Heart right ventricle (tissue), 16 donors: ENCODE measurements at regions of chr10 and their contacts with region 1.

Region 1: DNA sequence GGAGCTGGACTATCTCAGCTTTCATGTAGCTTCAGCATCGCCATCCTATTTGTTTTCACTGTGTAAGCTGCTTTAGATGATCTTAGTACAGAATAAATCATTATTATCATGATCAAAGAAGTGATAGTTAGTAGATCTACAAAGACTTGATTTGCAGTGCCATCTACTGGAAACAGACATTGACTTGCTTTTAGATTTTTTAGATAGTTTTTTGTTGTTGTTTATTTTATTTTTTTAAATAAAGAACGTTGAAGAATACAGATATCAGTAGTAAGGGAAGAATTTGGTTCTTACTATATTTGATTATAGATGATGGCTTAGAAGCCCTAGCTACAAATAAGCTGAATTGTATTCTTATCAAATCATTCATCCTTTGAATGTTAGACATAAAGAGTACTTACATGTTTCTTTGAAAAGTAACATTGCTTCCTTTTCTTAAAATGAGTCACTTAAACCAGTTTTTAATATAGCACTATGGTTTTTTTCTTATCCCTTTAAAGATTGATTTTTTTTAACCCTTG is 6.3 kb upstream of the SFMBT2 start:
- DNase-seq: no peak
- ATAC-seq: no peak
- H3K4me3 ChIP-seq: no peak overlapping the region
- H3K27ac ChIP-seq: no peak overlapping the region
- H3K4me1 ChIP-seq: peaks cover 3 to 15% (median 8%) of the 10 kb centered on the region in 9 donors
- H3K27me3 ChIP-seq: peaks cover 0 to 22% (median 18%) of the 10 kb centered on the region in 7 donors
- CTCF ChIP-seq: peak; percentile 21 to 82 (median 64)

Region 2: DNA sequence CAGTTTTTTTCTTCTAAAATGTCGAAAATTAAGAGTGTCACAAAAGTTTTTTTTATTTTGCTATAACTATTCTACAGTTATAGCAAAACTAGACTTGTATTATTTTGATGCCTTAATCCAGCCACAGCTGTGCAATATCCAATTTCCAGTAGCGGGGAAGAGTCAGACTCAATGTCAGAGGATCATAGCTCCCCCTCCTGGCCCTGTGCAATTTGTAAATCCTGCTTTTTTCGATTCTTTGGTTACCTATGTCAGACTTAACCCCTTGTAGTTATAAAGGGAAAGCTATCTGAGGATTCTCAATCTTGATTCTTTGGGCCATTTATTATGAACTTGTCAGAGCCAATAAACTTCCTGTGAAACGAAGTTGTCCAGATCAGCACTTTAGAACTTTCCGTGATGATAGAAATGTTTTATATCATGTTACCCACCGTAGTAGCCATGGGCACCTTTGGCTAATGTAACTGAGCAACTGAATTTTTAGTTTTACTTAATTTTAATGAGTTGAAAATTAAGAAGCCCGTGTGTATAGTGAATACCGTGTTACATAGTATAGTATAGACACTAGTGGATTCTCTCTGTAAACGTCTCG is 749.4 kb before region 1 on chr10:
- intact Hi-C with region 1: loop called in 8 of 10 experiments (anchors 5 to 10 kb)
- DNase-seq: peak in 1 of 2 donors; percentile 13
- ATAC-seq: no peak
- H3K4me3 ChIP-seq: no peak overlapping the region
- H3K27ac ChIP-seq: no peak overlapping the region
- H3K4me1 ChIP-seq: peaks cover 0 to 13% (median 5%) of the 10 kb centered on the region in 9 donors
- H3K27me3 ChIP-seq: peaks cover 0 to 29% (median 10%) of the 10 kb centered on the region in 7 donors
- CTCF ChIP-seq: peak in 7 of 9 donors; percentile 29 to 60 (median 44)

Region 3: DNA sequence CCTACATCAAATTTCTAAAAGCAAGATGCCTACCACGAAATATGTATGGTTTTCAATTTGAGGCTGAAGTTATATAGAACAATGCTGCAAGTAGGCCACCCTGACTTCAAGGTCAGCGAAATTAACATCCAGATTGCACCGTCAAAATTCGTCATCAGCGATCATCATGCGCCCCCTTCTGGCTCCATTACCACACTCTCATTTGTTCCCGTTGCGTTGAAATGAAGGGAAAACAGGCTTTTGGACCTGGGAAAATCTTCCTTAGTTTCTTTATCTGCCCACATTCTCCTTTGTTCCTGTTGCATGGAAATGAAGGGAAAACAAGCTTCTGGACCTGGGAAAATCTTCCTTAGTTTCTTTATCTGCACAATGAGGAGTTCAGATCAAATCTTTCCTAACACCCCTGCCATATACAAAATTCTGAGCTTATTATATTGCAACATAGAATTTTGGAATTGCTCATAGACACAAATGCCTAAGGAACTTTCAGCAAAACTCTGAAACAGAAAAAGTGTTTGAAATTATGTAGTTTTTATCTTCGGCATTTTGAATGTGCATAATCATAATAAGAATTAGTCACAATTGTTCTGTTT is 738.9 kb before region 1 on chr10:
- intact Hi-C with region 1: loop called in 7 of 10 experiments (anchors 5 to 10 kb)
- DNase-seq: peak; percentile 27 to 44
- ATAC-seq: peak in 2 of 8 donors; percentile 41 to 56
- H3K4me3 ChIP-seq: no peak overlapping the region
- H3K27ac ChIP-seq: no peak overlapping the region
- H3K4me1 ChIP-seq: peaks cover 0 to 12% (median 0%) of the 10 kb centered on the region in 9 donors
- H3K27me3 ChIP-seq: peaks cover 0 to 26% (median 5%) of the 10 kb centered on the region in 7 donors
- CTCF ChIP-seq: peak; percentile 36 to 79 (median 68)

Region 4: GRCh38 chr10:6786579-6787031 is 630.6 kb before region 1 on chr10:
- intact Hi-C with region 1: loop called in 4 of 10 experiments (anchors 5 to 10 kb)
- DNase-seq: no peak
- ATAC-seq: peak in 1 of 8 donors; percentile 55
- H3K4me3 ChIP-seq: no peak overlapping the region
- H3K27ac ChIP-seq: no peak overlapping the region
- H3K4me1 ChIP-seq: peaks cover 0 to 10% (median 0%) of the 10 kb centered on the region in 9 donors
- H3K27me3 ChIP-seq: peaks cover 0 to 20% (median 0%) of the 10 kb centered on the region in 7 donors
- CTCF ChIP-seq: peak in 6 of 9 donors; percentile 29 to 48 (median 42)

Region 5: GRCh38 chr10:6920072-6921019 is 496.8 kb before region 1 on chr10:
- intact Hi-C with region 1: loop called in 7 of 10 experiments (anchors 5 kb)
- DNase-seq: peak; percentile 59 to 62
- ATAC-seq: peak; percentile 83 to 95 (median 90)
- H3K4me3 ChIP-seq: no peak overlapping the region
- H3K27ac ChIP-seq: peak overlapping the region in 1 of 10 donors; percentile 9
- H3K4me1 ChIP-seq: peaks cover 0 to 15% (median 5%) of the 10 kb centered on the region in 9 donors
- H3K27me3 ChIP-seq: peaks cover 0 to 3% (median 0%) of the 10 kb centered on the region in 7 donors
- CTCF ChIP-seq: peak; percentile 28 to 75 (median 65)

Region 6: GRCh38 chr10:7121154-7121810 is 295.9 kb before region 1 on chr10:
- intact Hi-C with region 1: loop called in 7 of 10 experiments (anchors 2 to 5 kb)
- DNase-seq: peak; percentile 49 to 56
- ATAC-seq: peak in 7 of 8 donors; percentile 49 to 78 (median 69)
- H3K4me3 ChIP-seq: no peak overlapping the region
- H3K27ac ChIP-seq: no peak overlapping the region
- H3K4me1 ChIP-seq: no peaks in the 10 kb centered on the region
- H3K27me3 ChIP-seq: peaks cover 0 to 21% (median 0%) of the 10 kb centered on the region in 7 donors
- CTCF ChIP-seq: peak; percentile 51 to 84 (median 72)